AG04449 (cell line): ENCODE measurements at regions of chr16 and their contacts with region 1.

Region 1: GRCh38 chr16:57185944-57186871 is at the starts of genes PSME3IP1 and RSPRY1:
- DNase-seq: peak; percentile 96
- H3K4me3 ChIP-seq: peak within 1 kb of the TSS; percentile 98
- CTCF ChIP-seq: no peak

Region 2: GRCh38 chr16:56903866-56904265 is 282.3 kb before region 1 on chr16:
- CTCF ChIA-PET with region 1: no interaction called
- POLR2A ChIA-PET with region 1: no interaction called
- DNase-seq: no peak
- H3K4me3 ChIP-seq: no peak overlapping the region
- CTCF ChIP-seq: no peak

Region 3: GRCh38 chr16:57233944-57234706 is 47.9 kb after region 1 on chr16:
- CTCF ChIA-PET with region 1: no interaction called
- POLR2A ChIA-PET with region 1: no interaction called
- DNase-seq: no peak
- H3K4me3 ChIP-seq: no peak overlapping the region
- CTCF ChIP-seq: no peak

Region 4: DNA sequence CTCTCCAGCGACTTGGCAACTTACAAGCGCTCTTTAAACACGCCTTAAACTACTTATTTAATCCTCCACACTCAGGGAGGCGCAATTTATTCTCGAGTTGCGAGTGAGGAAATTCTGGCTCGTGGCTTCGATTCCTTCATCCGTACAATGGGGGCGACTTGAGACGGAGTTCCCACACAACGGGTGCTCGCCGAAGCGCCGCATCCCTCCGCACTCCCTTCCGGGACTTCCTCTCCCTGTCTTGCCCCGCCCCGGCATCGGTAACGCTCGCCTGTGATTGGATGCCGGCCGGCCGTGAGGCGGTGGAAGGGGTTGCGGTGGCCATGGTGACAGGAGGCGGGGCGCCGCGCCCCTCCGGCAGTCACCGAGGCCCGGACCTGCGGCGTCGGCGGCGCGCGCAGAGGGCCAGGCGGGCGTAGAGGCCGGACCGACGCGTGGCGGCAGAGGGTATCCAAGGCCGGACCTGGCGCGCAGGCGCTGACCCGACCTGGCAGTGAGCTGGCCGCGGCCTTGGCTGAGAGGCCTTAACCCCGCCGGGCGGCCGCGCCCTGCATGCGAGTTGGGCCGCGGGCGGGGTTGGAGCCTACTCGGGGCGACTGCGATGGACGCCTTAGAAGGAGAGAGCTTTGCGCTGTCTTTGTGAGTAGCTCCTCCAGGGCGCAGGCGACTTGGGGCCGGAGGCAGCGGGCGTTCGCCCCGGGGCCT is 58.7 kb after region 1 on chr16 and contains the start of gene ARL2BP:
- CTCF ChIA-PET with region 1: no interaction called
- POLR2A ChIA-PET with region 1: interaction called, 11 read pairs
- DNase-seq: peak; percentile 72
- H3K4me3 ChIP-seq: peak within 1 kb of the TSS; percentile 70
- CTCF ChIP-seq: no peak